GM18951 (cell line): ENCODE measurements at regions of chr1 and their contacts with region 1.

Region 1: DNA sequence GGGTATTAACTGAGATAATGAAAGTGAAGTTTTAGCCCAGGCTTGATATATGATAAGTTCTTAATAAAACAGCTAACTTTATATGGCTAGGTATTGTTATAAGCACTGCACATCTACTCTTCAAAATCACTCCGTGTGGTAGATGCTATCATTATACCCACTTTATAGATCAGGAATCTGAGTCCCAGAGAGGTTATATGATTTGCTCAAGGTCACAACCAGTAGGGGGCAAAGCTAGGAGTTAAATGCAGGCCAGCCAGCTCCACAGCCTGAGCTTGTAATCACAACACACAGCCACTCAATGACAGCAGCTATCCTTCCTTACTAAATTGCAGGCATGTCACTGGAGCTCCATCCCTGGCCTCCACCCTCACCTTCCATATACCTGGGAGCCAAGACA is 115.8 kb downstream of the CAPN8 start:
- POLR2A ChIP-seq: no peak

Region 2: DNA sequence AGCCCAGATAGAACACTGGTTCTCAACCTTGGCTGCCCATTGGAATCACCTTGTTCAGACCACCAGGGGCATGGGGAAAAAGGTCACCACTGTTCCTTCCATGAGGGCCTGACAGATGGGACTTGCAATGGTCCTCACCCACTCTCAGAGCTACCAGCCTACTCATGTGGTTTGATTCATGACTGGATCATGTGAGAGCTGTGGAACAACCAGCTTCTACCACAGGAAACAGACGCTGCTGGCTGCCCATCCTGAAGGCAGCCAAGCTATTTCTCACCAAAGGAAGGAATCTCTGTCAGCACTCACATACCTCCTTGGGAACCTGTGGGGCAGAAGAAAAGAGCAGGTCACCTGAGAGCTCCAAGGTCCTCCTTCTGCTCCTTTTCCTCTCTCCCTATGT is 62.2 kb after region 1 on chr1:
- in situ Hi-C with region 1: loop called (anchors 5 kb)
- POLR2A ChIP-seq: no peak